A549 (cell line): ENCODE measurements at regions of chr5 and their contacts with region 1.

Region 1: DNA sequence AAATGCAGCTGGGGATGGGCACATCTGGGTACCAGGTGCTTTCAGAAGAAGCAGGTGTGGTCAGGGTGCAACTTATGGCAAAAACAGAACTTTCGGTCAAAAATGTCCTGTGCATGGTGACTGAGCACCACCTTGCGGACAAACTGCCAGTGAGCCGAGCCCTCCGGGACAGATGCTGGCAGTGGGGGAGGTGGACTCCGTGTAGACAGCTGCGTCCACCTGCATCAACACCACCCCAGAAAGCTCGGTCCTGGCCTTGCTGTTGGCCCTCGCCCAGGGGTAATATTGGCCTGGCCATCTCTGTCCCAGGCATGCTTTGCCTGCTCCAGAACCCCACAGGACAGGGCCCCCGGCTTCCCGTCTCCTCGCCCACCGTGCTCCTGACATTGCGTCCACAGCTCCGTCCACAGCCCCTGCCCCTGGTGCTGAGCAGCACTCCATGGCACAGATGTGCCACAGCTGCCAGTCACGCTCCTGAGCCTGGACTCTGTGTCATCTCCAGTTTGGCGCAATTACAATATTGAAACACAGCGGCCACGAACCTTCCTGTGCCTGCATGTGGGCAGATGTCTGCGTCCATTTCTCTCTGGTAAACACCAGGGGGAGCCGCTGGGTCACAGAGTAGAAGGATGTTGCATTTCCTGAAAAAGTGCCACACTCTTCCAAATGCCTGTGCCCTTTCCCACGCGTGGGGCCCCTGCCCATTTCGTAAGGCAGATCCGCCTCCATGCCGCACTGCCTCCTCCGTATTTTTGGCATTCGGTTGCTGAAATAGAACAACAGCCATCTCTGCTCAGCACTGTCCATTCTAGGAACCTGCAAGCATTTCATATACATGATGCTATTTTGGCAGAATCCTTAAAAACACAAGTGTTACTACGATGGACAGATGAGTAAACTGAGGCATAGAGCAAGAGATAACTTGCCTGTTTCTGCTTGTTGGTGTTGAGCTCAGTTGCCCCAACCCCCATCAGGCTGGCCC is 33.4 kb upstream of the SLC6A19 start:
- DNase-seq: peak; percentile 75 to 85
- ATAC-seq: peak; percentile 81 to 92
- H3K4me3 ChIP-seq: peak overlapping the region; percentile 44
- H3K27ac ChIP-seq: peak overlapping the region; percentile 29 to 67; a peak in 4 of 6 replicates
- H3K4me1 ChIP-seq: no peaks in the 10 kb centered on the region
- CTCF ChIP-seq: peak; percentile 66
- EP300 ChIP-seq: no peak
- POLR2A ChIP-seq: no peak
- RAD21 ChIP-seq: peak; percentile 88 to 97

Region 2: DNA sequence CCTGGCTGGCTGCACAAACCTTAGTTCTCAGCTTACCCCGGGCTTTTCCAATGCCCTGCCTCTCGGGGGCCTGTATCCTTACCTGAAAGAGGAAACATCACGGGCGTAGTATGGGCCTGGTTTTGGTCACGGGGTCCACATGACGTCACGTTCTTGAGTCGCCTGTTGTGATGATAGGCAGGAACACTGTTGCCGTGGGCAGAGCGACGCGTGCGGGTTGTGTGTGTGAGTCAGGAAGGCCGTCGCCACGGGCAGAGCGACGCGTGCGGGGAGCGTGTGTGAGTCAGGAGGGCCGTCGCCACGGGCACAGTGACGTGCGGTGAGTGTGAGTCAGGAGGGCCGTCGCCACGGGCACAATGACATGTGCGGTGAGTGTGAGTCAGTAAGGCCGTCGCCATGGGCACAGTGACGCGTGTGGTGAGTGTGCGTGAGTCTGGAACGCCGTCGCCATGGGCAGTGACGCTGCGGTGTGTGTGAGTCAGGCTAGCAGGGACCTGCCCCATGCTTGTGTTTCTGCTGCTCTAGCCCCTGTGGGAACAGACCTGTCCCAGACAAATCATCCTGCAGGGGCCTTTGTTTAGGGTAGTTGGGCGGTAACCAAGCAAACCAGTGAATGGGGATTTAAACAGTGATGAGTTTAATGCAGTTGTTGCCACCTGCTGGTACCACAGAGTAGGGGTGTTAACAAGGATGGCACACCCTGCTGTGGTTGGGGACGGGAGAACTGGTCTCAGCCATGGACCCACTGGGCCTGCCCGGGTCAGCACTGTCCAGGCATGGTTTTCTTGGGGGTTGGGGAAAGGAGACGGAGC is 255.5 kb before region 1 on chr5:
- CTCF ChIA-PET with region 1: interaction called, 16 read pairs
- POLR2A ChIA-PET with region 1: no interaction called
- DNase-seq: peak; percentile 96 to 98
- ATAC-seq: peak; percentile 95 to 96
- H3K4me3 ChIP-seq: 0 out of 3 replicates have a peak overlapping the region, but pooled peaks have one; percentile 2
- H3K27ac ChIP-seq: peak overlapping the region; percentile 60 to 83
- H3K4me1 ChIP-seq: peaks cover 24% of the 10 kb centered on the region
- CTCF ChIP-seq: peak; percentile 47
- EP300 ChIP-seq: peak; percentile 54 to 83; a peak in 3 of 5 replicates
- POLR2A ChIP-seq: no peak
- RAD21 ChIP-seq: peak in 1 of 2 experiments; percentile 27; a peak in 2 of 5 replicates

Region 3: DNA sequence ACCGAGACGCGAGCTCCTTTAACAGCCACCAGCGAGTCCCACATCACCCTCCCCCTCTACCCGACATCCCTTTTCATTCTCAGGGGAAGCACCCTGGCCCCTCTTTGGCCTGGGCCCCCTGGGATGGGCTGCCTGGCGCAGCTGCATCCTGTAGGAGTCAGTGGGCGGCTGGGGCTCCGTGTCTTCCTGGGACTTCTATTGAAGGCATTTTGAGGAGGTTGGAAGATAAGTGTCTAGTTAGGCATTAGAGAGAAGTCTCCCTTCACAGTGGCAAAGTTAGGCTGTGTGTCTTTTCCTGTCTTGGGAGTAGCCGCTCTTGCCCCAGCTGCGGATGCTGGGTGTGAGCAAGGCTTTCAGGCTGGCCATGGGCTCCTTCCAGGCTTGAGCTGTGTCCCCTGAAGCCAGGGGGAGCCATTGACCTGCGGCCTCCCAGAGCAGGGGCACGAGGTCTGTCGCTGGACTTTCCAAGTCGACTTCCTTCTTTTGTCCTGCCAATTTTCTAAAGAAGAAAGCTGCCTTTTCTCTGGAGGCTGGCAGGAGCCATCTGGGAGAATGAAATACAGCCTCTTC is 178.0 kb before region 1 on chr5:
- CTCF ChIA-PET with region 1: interaction called, 13 read pairs
- POLR2A ChIA-PET with region 1: no interaction called
- DNase-seq: no peak
- ATAC-seq: peak in 1 of 2 experiments; percentile 70; a peak in 3 of 6 replicates
- H3K4me3 ChIP-seq: no peak overlapping the region
- H3K27ac ChIP-seq: no peak overlapping the region
- H3K4me1 ChIP-seq: no peaks in the 10 kb centered on the region
- CTCF ChIP-seq: no peak
- EP300 ChIP-seq: no peak
- POLR2A ChIP-seq: no peak
- RAD21 ChIP-seq: peak; percentile 18 to 26; a peak in 1 of 5 replicates

Region 4: DNA sequence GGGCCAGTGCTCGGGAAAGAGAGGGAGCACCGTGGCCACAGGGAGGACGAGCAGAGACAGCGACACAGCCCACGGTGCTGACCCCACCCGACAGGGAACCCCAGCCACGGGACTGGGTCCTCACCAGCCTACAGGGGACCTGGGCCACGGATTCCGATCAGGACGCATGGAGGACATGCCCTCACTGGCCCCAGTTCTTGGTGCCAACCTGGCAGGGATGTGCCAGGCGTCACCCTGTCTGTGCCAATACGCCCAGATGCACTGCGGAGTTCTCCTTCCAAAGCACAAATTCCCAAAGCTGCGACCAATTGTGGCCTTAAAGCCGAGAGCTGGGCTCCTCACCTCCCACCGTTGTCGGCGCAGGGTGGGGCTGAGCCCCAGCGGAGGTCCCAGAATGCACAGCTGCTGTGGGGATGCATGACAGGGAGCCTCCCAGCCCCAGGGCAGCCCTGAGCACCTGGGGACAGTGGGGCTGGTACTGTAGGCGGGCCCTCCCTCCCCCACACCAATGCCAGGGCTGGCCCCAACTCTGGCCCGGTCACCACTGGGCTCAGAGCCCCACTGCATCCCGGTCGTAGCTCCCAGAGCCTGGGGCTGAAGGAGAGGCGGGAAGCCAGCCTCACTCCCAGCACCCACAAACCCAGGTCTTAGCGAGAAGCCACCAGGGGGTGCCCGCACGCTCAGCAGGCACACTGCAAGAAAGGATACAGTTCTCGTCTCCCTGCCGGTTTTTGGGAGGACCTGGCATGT is 115.2 kb before region 1 on chr5:
- CTCF ChIA-PET with region 1: interaction called, 14 read pairs
- POLR2A ChIA-PET with region 1: no interaction called
- DNase-seq: peak in 1 of 2 experiments; percentile 45
- ATAC-seq: peak in 1 of 2 experiments; percentile 52; a peak in 2 of 6 replicates
- H3K4me3 ChIP-seq: no peak overlapping the region
- H3K27ac ChIP-seq: no peak overlapping the region
- H3K4me1 ChIP-seq: no peaks in the 10 kb centered on the region
- CTCF ChIP-seq: 0 out of 3 replicates have a peak, but pooled peaks have one; percentile 16
- EP300 ChIP-seq: no peak
- POLR2A ChIP-seq: no peak
- RAD21 ChIP-seq: no peak

Region 5: GRCh38 chr5:1152156-1152555 is 15.9 kb before region 1 on chr5:
- CTCF ChIA-PET with region 1: interaction called, 49 read pairs
- POLR2A ChIA-PET with region 1: no interaction called
- DNase-seq: no peak
- ATAC-seq: no peak
- H3K4me3 ChIP-seq: no peak overlapping the region
- H3K27ac ChIP-seq: no peak overlapping the region
- H3K4me1 ChIP-seq: peaks cover 8% of the 10 kb centered on the region; the same call in 1 of the 3 replicates
- CTCF ChIP-seq: no peak
- EP300 ChIP-seq: no peak
- POLR2A ChIP-seq: no peak
- RAD21 ChIP-seq: no peak

Region 6: DNA sequence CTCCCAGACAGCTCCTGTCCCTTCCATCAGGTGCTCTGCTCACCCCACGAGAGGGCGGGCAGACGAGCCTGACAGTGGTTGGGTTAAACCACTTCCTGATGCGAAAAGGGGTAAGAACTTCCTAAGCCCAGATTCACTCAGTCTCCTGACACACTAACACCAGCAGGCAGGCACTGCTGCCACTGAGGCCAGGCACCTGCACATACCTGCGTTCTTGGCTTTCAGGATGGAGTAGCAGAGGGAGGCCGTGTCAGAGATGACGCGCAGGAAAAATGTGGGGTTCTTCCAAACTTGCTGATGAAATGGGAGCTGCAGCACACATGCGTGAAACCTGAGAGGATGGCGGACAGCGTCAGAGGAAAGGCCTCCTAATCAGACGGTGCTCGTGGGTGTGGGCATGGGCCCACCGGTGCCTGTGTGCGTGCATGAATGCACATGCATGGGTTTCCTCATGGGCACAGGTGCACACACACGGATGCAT is 87.1 kb after region 1 on chr5:
- CTCF ChIA-PET with region 1: no interaction called
- POLR2A ChIA-PET with region 1: no interaction called
- DNase-seq: no peak
- ATAC-seq: no peak; a peak in 1 of 6 replicates
- H3K4me3 ChIP-seq: no peak overlapping the region
- H3K27ac ChIP-seq: no peak overlapping the region
- H3K4me1 ChIP-seq: no peaks in the 10 kb centered on the region
- CTCF ChIP-seq: no peak
- EP300 ChIP-seq: no peak
- POLR2A ChIP-seq: no peak
- RAD21 ChIP-seq: no peak

Region 7: GRCh38 chr5:1414236-1415058 is 246.4 kb after region 1 on chr5:
- CTCF ChIA-PET with region 1: no interaction called
- POLR2A ChIA-PET with region 1: no interaction called
- DNase-seq: peak in 1 of 2 experiments; percentile 37
- ATAC-seq: peak; percentile 42 to 69; a peak in 4 of 6 replicates
- H3K4me3 ChIP-seq: no peak overlapping the region
- H3K27ac ChIP-seq: no peak overlapping the region
- H3K4me1 ChIP-seq: no peaks in the 10 kb centered on the region
- CTCF ChIP-seq: no peak
- EP300 ChIP-seq: no peak
- POLR2A ChIP-seq: no peak
- RAD21 ChIP-seq: no peak

Region 8: DNA sequence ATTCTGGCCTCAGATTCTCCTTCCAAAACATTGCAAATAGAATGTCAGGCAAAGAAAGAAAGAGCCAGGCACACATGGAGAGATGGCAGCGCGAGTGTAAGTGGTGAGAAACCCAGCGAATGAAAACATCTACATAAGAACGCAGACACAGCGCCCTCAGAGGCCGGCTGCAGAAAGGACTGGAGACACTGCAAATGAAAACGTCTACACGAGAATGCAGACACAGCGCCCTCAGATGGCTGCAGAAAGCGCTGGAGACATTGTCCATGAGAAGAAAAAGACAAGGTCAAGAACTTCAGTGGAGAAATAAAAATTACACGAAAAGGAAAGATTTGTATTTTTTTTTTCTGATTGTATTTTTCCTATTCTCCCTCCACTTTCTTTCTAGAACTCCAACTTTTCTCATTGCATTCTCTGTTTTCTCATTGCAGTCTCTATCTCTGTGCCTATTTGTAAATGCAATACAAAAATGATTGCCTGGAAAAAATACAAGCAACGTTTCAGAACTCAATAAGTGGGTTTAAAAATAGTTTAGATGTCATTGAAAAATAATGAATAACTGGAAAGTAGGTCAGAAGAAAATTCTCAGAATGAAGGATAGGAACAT is 473.6 kb after region 1 on chr5:
- CTCF ChIA-PET with region 1: interaction called, 45 read pairs
- POLR2A ChIA-PET with region 1: no interaction called
- DNase-seq: peak; percentile 88 to 91
- ATAC-seq: peak; percentile 66 to 86
- H3K4me3 ChIP-seq: no peak overlapping the region
- H3K27ac ChIP-seq: no peak overlapping the region
- H3K4me1 ChIP-seq: 0 out of 3 replicates have a peak, but pooled peaks cover 4% of the 10 kb centered on the region
- CTCF ChIP-seq: peak; percentile 98
- EP300 ChIP-seq: no peak
- POLR2A ChIP-seq: no peak
- RAD21 ChIP-seq: peak; percentile 75 to 81